ENCODE measurements at regions of chr2 and their contacts with region 1.

Region 1: DNA sequence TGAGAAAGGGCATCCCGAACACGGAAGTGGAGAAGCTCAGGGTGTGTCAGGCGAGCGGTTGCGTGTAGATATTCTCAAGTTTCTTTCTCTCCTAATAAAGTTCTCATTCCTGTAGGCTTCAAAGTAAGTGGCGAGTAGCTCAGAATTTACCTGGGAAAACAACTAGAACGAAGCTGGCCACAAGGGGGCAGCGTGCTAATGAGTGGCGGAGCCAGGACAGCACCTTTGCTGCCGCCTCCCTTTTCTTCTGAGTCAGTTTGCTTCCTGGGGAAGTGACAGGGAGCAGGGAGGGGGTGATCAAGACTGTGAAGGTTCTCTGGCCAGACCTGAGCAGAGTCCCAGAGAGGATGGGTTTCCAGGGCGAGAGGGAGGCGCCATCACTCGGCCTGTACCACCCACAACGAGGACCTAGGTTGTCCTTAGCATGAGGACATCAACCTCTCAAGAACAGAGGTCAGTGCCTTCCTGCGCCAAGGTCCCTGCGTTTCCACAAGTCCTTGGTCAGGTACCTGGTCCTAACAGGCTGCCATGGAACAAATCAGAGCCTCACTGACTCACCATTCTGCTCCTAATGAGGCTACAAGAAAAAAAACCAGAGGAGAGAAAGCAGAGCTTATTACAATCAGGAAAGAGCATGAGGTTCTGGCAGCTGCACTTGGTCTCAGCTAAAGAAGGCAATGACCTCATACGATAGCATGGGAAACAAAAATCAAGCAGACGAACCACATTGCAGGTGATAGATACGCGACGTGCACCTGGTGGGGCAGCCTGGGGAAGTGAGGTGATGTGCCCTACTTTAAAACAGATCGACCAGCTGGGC is 98.6 kb downstream of the PLB1 start:
- H3K4me3 Mint-ChIP-seq: peak overlapping the region; percentile 32
- H3K27ac Mint-ChIP-seq: peak overlapping the region; percentile 71
- H3K4me1 Mint-ChIP-seq: peaks cover 24% of the 10 kb centered on the region
- H3K27me3 Mint-ChIP-seq: no peaks in the 10 kb centered on the region

Region 2: GRCh38 chr2:28621172-28622100 is 26.9 kb after region 1 on chr2:
- intact Hi-C with region 1: loop called (anchors 2 kb)
- H3K4me3 Mint-ChIP-seq: peak overlapping the region; percentile 30
- H3K27ac Mint-ChIP-seq: peak overlapping the region; percentile 61
- H3K4me1 Mint-ChIP-seq: peaks cover 74% of the 10 kb centered on the region
- H3K27me3 Mint-ChIP-seq: no peaks in the 10 kb centered on the region